Activated naive CD8-positive, alpha-beta T cell treated with anti-CD3 and anti-CD28 coated beads, Interleukin-2, amount 10 ng/mL, durations not matched to agents 7 days and 5 days (primary cell): ENCODE measurements at regions of chr1 and their contacts with region 1.

Region 1: DNA sequence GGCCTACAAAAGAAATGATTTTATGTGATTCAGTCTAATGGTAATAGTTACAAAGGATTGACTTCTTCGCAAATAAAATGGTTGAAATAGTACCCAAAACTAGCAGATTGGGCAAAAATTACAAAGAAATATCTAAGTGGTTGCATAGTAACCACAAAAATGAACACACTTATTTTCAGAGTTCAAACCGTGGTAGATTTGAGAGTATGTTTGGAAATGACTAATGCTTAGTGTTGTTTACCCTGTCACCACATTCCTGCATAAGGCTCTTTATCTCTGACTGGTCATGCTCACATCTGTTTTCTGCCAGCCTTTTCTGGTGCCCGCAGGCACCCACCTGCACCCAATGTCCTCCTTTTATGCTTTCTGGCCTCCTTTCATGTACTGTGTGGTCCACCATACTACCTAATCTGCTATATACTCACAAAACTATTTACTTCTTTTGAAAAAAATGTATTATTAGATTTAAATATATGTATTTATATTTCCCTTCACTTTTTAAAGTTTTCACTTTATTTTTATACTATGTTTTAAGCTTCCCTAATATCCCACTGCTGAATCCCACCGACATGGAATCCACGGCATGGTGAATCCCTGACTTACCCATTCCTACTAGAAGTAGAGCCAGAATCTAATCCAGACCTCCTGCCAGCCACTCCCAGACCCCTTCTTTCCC is 30.3 kb downstream of the PTPRC start:
- DNase-seq: no peak
- ATAC-seq: peak; percentile 78
- H3K4me3 Mint-ChIP-seq: peak overlapping the region; percentile 65
- H3K27ac Mint-ChIP-seq: peak overlapping the region; percentile 58
- H3K4me1 Mint-ChIP-seq: peaks cover 76% of the 10 kb centered on the region
- H3K27me3 Mint-ChIP-seq: no peaks in the 10 kb centered on the region

Region 2: DNA sequence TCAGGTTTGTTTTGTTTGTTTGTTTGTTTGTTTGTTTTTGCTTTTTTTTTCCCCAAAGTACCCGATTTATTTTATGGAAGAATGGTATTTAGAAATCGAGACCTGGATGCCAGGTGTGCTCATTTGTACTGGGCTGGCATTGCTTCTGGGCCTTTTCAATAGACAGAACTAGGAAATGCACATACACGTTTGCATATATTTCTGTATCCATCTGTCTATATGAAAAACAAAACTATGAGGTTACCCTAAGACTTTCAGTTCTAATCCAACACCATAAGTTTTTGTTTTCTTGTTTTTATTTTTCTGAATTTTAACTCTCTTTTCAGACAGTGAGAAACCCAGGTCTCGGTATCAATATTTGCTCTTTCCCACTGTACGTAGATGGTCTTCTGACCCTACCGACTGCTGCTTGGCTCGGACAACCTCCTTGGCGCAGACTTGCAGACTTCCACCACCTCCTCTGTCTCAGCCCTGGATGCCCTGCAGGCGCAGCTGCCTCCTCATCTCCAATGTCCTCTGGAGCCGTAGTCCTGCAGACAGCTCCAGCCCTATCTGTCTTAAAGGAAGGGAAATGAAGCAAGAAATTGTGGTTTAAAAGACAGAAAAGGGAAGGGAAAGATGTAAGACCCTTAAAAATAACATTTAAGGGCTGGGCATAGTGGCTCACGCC is 340.6 kb before region 1 on chr1:
- POLR2A ChIA-PET with region 1: no interaction called
- DNase-seq: no peak
- ATAC-seq: no peak
- H3K4me3 Mint-ChIP-seq: no peak overlapping the region
- H3K27ac Mint-ChIP-seq: no peak overlapping the region
- H3K4me1 Mint-ChIP-seq: peaks cover 1% of the 10 kb centered on the region
- H3K27me3 Mint-ChIP-seq: peaks cover 19% of the 10 kb centered on the region

Region 3: DNA sequence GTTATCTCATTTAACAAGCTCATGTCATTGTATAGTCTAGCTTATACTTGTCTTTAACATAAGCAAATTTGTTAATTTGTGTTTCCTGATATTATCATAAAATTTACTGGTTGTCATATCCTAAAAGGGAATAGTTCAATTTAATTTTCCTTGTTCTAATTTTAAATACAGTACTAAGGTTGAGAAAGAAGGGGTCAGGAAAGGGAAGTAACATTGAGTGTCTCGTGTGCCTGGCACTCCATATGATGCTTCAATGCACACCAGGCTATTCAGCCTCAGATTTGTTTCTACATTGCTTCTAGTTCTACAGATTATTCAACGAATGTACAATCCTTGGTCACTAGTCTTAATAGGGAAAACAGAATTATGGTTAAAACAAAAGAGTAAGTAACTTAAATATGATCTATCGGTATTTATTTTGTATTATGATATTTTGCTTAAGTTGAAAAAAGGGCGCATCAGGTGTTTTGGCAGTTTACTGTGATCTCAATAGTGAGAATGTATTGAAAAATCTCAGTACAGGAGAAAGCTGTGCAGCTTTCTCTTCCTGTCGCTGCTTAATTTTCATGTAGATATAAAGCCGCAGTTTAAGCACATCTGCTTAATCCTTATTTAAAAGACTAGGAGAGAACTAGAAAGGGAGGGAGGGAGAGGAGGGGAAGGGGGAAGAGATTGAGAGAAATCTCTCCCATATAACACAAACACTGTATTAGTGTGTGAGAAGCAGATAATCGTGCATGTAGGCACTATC is 17.3 kb before region 1 on chr1:
- POLR2A ChIA-PET with region 1: interaction called, 11 read pairs
- DNase-seq: no peak
- ATAC-seq: peak; percentile 22
- H3K4me3 Mint-ChIP-seq: peak overlapping the region; percentile 84
- H3K27ac Mint-ChIP-seq: peak overlapping the region; percentile 87
- H3K4me1 Mint-ChIP-seq: peaks cover 65% of the 10 kb centered on the region
- H3K27me3 Mint-ChIP-seq: no peaks in the 10 kb centered on the region

Region 4: DNA sequence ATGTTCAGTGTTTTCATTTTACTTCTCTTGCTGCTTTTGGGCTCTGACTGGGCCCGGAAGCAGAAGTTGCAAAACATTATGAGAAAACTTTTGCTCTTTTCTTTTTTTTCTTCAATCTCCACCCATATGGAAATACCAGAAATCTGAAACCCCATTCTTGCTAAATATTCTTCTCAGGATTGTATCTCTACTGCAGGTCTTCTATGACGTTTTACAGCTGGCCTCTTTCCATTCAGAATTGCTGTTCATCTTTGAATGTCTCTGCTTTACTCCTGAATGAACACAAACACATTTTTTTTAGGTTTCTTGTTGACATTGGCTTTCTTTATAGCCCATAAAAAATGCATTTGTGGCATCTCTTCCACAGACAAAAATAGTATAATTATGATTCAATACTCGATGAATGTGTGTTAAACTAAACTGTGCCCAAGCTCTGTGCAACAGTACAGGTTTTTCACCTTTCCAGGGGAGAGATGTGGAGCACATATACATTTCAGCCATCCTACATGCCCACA is 11.6 kb before region 1 on chr1:
- POLR2A ChIA-PET with region 1: interaction called, 11 read pairs
- DNase-seq: no peak
- ATAC-seq: peak; percentile 34
- H3K4me3 Mint-ChIP-seq: peak overlapping the region; percentile 83
- H3K27ac Mint-ChIP-seq: peak overlapping the region; percentile 88
- H3K4me1 Mint-ChIP-seq: peaks cover 56% of the 10 kb centered on the region
- H3K27me3 Mint-ChIP-seq: no peaks in the 10 kb centered on the region